Activated CD4-positive, alpha-beta T cell treated with anti-CD3 and anti-CD28 coated beads, Interleukin-2, amount 10 ng/mL, durations not matched to agents 24 days and 14 days (primary cell): ENCODE measurements at regions of chr15 and their contacts with region 1.

Region 1: DNA sequence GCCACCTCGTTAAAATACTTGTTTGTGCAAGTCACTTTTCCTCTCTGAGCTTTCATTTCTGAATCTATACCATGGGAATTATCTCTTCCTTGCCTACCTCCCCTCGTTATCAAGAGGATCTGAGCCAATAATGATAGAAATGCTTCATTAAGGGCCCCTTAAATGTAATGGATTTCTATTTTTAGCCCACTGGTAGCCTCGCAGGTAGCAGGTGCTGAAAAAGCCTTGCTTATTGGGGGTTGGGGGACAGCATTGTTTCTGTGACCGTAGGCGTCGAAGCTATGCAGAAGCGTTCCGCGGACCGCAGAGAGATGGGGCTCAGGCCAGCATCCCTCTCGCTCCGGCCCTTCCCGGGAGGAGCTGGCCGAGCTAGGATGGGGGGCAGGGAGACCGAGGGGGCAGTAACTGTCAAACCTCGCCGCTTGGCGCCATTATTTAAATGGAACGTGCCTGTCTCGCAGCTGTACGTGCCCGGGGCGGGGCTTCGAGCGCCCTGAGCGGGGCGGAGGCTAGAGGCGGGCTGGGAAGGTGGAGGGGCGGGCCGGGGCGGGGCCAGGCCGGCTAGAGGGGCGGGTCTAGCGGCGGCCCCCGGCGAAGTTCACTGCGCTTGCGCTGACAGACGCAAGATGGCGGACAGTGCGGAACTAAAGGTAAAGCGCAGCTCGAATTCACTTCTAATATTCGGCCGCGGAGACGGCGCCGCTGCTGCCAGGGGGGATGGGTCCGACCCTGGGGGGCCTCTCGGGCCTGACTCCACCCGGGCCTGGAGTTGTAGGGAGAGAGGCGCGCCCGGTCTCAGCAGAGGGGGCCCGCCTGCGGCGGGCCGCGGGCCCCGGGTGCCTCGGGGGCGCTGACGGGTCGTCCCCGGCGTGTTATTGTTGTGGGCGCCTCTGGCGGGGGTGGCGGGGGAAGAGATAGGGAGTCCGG is at the start of gene PIAS1:
- DNase-seq: peak; percentile 98
- H3K4me3 Mint-ChIP-seq: peak within 1 kb of the TSS; percentile 93
- H3K27ac Mint-ChIP-seq: peak within 1 kb of the TSS; percentile 94
- H3K4me1 Mint-ChIP-seq: peaks cover 32% of the 10 kb centered on the region
- H3K27me3 Mint-ChIP-seq: peaks cover 7% of the 10 kb centered on the region
- total RNA-seq, gene PIAS1: 27.8 and 29.4 TPM in 2 replicates

Region 2: DNA sequence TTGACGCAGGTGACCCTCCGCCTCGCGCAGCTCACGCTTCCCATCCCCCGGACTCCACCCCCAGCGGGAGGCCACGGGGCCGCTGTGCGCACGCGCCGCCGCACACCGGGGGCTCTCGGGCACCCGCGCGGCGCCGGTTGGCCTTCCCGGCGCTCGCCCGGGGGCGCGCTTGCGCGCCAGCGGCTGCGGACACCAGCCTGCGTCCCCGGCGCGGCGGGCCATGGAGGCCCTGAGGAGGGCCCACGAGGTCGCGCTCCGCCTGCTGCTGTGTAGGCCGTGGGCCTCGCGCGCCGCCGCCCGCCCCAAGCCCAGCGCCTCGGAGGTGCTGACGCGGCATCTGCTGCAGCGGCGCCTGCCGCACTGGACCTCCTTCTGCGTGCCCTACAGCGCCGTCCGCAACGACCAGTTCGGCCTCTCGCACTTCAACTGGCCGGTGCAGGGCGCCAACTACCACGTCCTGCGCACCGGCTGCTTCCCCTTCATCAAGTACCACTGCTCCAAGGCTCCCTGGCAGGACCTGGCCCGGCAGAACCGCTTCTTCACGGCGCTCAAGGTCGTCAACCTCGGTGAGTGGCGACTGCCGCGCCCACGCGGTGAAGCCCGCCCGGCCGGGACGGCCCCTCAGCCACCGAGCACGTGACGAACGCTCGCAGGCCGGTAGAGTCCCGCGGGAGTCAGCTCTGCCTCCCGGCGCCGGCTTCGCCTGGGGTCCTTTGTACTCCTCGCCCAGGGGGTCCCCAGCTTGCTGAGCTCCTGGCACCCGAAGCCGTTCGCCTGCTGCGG is 532.7 kb before region 1 on chr15 and contains the start of gene C15orf61:
- intact Hi-C with region 1: loop called (anchors 10 kb)
- DNase-seq: peak; percentile 96
- H3K4me3 Mint-ChIP-seq: peak within 1 kb of the TSS; percentile 98
- H3K27ac Mint-ChIP-seq: peak within 1 kb of the TSS; percentile 99
- H3K4me1 Mint-ChIP-seq: peaks cover 25% of the 10 kb centered on the region
- H3K27me3 Mint-ChIP-seq: no peaks in the 10 kb centered on the region
- total RNA-seq, gene C15orf61: 4.7 and 7.3 TPM in 2 replicates

Region 3: GRCh38 chr15:68114356-68114755 is 60.4 kb after region 1 on chr15:
- intact Hi-C with region 1: loop called (anchors 10 kb)
- DNase-seq: no peak
- H3K4me3 Mint-ChIP-seq: peak overlapping the region; percentile 79
- H3K27ac Mint-ChIP-seq: no peak overlapping the region
- H3K4me1 Mint-ChIP-seq: peaks cover 26% of the 10 kb centered on the region
- H3K27me3 Mint-ChIP-seq: no peaks in the 10 kb centered on the region

Region 4: GRCh38 chr15:68187559-68187958 is 133.6 kb after region 1 on chr15:
- intact Hi-C with region 1: loop called (anchors 10 kb)
- DNase-seq: peak; percentile 47
- H3K4me3 Mint-ChIP-seq: no peak overlapping the region
- H3K27ac Mint-ChIP-seq: no peak overlapping the region
- H3K4me1 Mint-ChIP-seq: no peaks in the 10 kb centered on the region
- H3K27me3 Mint-ChIP-seq: no peaks in the 10 kb centered on the region

Region 5: DNA sequence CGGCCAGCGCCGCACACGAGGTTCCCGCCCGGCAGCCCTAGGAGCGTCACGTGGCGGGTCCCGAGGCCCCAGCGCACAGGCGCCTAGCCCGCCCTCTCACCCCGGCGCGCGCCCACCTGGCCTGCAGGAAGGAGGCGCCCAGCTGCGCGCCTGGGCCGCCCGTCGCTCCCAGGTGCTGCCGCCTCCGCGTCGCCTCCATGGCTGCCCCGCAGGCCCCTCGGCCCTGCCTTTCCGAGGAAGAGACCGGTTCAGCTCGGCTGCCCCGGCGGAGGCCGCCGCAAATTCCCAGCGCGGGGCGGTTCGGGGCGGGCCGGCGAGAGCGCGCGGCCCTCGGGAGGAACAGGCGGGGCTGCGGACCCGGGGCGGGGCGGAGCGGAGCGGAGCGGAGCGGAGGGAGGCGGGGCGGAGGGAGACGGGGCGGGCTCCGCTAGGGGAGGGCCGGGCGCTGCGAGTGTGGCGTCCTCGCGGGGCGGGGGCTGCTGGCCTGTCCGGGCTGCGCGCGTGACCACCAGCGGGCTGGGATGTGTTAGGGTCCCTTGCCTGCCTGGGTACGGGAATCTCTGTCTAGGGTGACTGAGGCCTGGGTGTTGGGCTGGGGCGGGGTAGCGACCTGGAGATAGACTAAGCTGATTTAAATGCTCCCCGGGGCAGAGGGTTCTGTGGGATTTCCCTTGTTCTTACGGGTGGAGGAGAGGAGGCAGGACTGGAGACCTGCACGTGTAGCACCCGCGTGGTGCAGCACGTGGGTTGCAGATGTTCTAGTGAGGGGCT is 175.6 kb after region 1 on chr15 and contains the start of gene CLN6:
- intact Hi-C with region 1: loop called (anchors 1 kb)
- DNase-seq: peak; percentile 94
- H3K4me3 Mint-ChIP-seq: peak within 1 kb of the TSS; percentile 91
- H3K27ac Mint-ChIP-seq: peak within 1 kb of the TSS; percentile 89
- H3K4me1 Mint-ChIP-seq: peaks cover 37% of the 10 kb centered on the region
- H3K27me3 Mint-ChIP-seq: peaks cover 7% of the 10 kb centered on the region
- total RNA-seq, gene CLN6: 99.0 and 102 TPM in 2 replicates